ENCODE measurements at regions of chr1 and their contacts with region 1.

Region 1: GRCh38 chr1:20633190-20634064 is at the start of gene PINK1:
- DNase-seq: peak; percentile 91
- H3K4me3 ChIP-seq: peak within 1 kb of the TSS; percentile 68 to 99 (median 78)
- H3K27ac ChIP-seq: peak within 1 kb of the TSS; percentile 94 to 99 (median 96)
- H3K4me1 ChIP-seq: peaks cover 0 to 23% (median 14%) of the 10 kb centered on the region in 4 donors
- H3K27me3 ChIP-seq: no peaks in the 10 kb centered on the region
- CTCF ChIP-seq: peak; percentile 97 to 100 (median 99)
- EP300 ChIP-seq: no peak
- POLR2A ChIP-seq: peak; percentile 57
- total RNA-seq, gene PINK1: 122 to 235 (median 192) TPM

Region 2: GRCh38 chr1:20521960-20522861 is 111.2 kb before region 1 on chr1:
- in situ Hi-C with region 1: loop called (anchors 5 to 10 kb)
- intact Hi-C with region 1: no loop called
- DNase-seq: peak; percentile 86
- H3K4me3 ChIP-seq: peak overlapping the region in 1 of 4 donors; percentile 18
- H3K27ac ChIP-seq: no peak overlapping the region
- H3K4me1 ChIP-seq: peaks cover 0 to 6% (median 0%) of the 10 kb centered on the region in 4 donors
- H3K27me3 ChIP-seq: peaks cover 5% of the 10 kb centered on the region
- CTCF ChIP-seq: peak; percentile 83 to 96 (median 88)
- EP300 ChIP-seq: no peak
- POLR2A ChIP-seq: no peak

Region 3: DNA sequence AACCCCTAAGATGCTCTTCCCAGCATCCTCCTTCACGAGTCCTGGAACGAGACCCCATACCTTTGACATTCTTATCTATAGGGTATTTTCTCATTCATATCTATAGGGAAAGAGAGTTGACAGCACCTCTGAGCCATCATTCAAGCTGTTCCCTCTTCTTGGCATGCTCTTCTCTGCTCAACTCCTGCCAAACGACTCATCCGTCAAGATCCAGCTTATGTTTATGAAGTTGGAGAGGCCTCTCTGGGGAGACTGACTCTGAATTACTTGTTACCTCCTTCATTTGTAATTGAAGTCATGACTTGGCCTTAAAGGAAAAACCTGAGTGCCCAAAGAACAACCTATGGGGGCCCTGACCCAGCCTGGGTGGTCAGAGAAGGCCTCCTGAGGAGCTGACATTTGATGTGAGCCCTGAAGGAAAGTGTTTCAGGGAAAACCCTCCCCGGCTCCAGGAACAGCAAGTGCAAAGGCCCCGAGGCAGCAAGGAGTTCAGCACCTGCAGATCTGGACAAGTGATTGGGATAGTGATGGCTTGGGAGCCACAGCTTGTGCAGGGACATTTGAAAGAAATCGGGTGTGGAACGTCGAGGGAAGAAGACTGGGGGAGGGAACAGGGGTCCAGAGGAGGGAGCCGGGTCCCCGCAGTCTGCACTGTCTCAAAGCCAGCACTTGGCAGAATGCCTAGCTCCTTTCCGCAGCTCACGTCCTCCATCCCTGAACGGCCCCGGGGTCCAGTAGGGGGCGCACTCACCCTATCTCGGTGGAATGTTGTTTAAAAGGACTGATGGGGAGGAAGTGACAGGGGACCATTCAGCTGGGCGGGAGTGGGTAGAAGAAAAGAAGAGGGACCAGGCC is 58.5 kb before region 1 on chr1:
- in situ Hi-C with region 1: loop called in 2 of 4 experiments (anchors 5 kb)
- intact Hi-C with region 1: no loop called
- DNase-seq: peak; percentile 89
- H3K4me3 ChIP-seq: no peak overlapping the region
- H3K27ac ChIP-seq: no peak overlapping the region
- H3K4me1 ChIP-seq: no peaks in the 10 kb centered on the region
- H3K27me3 ChIP-seq: peaks cover 23% of the 10 kb centered on the region
- CTCF ChIP-seq: peak; percentile 54 to 82 (median 75)
- EP300 ChIP-seq: no peak
- POLR2A ChIP-seq: no peak

Region 4: DNA sequence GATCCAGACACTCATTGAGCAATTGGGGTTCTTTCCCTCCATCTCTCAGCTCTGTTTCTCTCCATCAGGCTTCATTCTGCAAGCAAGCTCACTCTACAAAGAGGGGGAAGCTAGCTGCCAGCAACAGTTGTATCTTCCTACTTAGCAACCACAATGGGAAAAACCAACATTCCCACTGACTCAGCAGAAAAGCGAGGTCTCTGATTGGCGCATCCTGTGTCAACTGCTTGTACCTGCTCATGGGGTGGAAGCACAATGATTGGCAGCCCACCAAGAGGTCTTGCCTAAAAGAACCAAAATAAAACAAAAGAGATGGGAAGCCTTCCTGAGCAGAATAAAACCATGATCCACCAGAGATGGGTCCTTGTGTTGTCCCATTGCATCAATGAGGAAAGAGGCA is 48.5 kb before region 1 on chr1:
- in situ Hi-C with region 1: loop called in 1 of 4 experiments (anchors 5 kb)
- intact Hi-C with region 1: no loop called
- DNase-seq: no peak
- H3K4me3 ChIP-seq: no peak overlapping the region
- H3K27ac ChIP-seq: no peak overlapping the region
- H3K4me1 ChIP-seq: peaks cover 0 to 13% (median 8%) of the 10 kb centered on the region in 4 donors
- H3K27me3 ChIP-seq: peaks cover 18% of the 10 kb centered on the region
- CTCF ChIP-seq: no peak
- EP300 ChIP-seq: no peak
- POLR2A ChIP-seq: no peak

Region 5: GRCh38 chr1:21490774-21491553 is 857.5 kb after region 1 on chr1:
- in situ Hi-C with region 1: no loop called
- intact Hi-C with region 1: no loop called
- DNase-seq: peak; percentile 21
- H3K4me3 ChIP-seq: no peak overlapping the region
- H3K27ac ChIP-seq: no peak overlapping the region
- H3K4me1 ChIP-seq: no peaks in the 10 kb centered on the region
- H3K27me3 ChIP-seq: peaks cover 11% of the 10 kb centered on the region
- CTCF ChIP-seq: peak; percentile 31 to 45 (median 40)
- EP300 ChIP-seq: no peak
- POLR2A ChIP-seq: no peak